Calu3 (cell line): ENCODE measurements at regions of chr20 and their contacts with region 1.

Region 1: GRCh38 chr20:62386383-62387218 is at the start of gene RPS21:
- DNase-seq: peak; percentile 98
- H3K4me3 Mint-ChIP-seq: peak within 1 kb of the TSS; percentile 96
- H3K27ac Mint-ChIP-seq: peak within 1 kb of the TSS; percentile 92
- H3K4me1 Mint-ChIP-seq: peaks cover 63% of the 10 kb centered on the region
- H3K27me3 Mint-ChIP-seq: no peaks in the 10 kb centered on the region
- CTCF ChIP-seq: no peak
- total RNA-seq, gene RPS21: 1,920 and 1,936 TPM in 2 replicates

Region 2: GRCh38 chr20:62025832-62026563 is 360.6 kb before region 1 on chr20:
- CTCF ChIA-PET with region 1: no interaction called
- intact Hi-C with region 1: no loop called
- DNase-seq: no peak
- H3K4me3 Mint-ChIP-seq: no peak overlapping the region
- H3K27ac Mint-ChIP-seq: no peak overlapping the region
- H3K4me1 Mint-ChIP-seq: peaks cover 59% of the 10 kb centered on the region
- H3K27me3 Mint-ChIP-seq: no peaks in the 10 kb centered on the region
- CTCF ChIP-seq: no peak

Region 3: GRCh38 chr20:62121776-62122631 is 264.6 kb before region 1 on chr20 and contains the start of gene LSM14B:
- CTCF ChIA-PET with region 1: no interaction called
- intact Hi-C with region 1: no loop called
- DNase-seq: peak; percentile 100
- H3K4me3 Mint-ChIP-seq: peak within 1 kb of the TSS; percentile 81
- H3K27ac Mint-ChIP-seq: peak within 1 kb of the TSS; percentile 82
- H3K4me1 Mint-ChIP-seq: peaks cover 16% of the 10 kb centered on the region
- H3K27me3 Mint-ChIP-seq: peaks cover 38% of the 10 kb centered on the region
- CTCF ChIP-seq: no peak
- total RNA-seq, gene LSM14B: 76.9 and 78.0 TPM in 2 replicates

Region 4: DNA sequence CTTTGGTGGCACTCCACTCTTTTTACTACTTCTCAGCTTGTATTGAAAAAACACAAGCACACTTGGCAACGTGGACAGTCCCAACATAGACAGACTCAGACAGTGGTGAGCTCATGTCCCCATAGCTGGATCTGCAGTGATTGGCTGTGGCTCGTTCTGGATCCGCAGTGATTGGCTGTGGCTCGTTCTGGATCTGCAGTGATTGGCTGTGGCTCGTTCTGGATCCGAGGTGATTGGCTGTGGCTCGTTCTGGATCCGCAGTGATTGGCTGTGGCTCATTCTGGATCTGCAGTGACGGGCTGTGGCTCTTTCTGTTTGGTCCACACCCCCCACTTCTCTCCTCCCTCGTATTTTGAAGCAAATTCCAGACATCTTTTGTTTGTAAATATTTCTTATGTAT is 120.3 kb before region 1 on chr20:
- CTCF ChIA-PET with region 1: no interaction called
- intact Hi-C with region 1: no loop called
- DNase-seq: no peak
- H3K4me3 Mint-ChIP-seq: no peak overlapping the region
- H3K27ac Mint-ChIP-seq: no peak overlapping the region
- H3K4me1 Mint-ChIP-seq: no peaks in the 10 kb centered on the region
- H3K27me3 Mint-ChIP-seq: no peaks in the 10 kb centered on the region
- CTCF ChIP-seq: no peak

Region 5: DNA sequence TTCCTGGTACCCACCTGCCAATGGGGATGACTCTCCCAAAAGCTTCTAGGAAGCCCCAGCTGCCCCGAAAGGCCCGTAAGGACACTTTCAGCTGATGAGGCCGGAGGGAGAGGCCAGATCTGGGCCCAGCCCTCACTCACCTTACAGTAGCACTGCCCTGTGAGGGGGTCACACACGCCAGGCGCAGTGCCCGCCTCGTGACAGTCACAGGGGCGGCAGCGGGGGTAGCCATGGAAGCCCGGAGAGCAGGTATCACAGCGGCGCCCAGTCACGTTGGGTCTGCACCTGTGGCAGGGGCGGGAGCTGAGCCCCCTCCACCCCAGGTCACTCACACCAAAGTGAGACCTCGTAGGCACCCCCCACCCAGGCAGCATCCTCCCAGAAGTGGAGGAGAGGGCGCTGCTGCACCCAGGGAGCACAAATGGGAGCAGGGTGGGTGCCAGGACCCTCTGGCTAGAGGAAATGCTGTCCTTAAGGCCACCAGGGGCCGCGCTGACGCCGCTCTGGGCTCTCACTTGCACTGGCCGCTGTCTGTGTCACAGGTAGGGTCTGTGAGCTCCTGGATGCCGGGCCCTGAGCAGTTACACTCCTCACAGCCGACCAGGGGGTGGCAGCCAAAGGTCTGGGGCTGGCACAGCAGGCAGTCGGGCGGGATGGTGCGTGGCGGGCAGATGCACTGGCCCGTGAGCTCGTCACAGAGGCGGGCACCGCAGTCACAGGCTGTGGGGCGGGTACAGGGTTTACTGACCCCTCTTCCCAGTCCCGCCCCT is 58.7 kb before region 1 on chr20:
- CTCF ChIA-PET with region 1: interaction called, 14 read pairs
- intact Hi-C with region 1: no loop called
- DNase-seq: no peak
- H3K4me3 Mint-ChIP-seq: no peak overlapping the region
- H3K27ac Mint-ChIP-seq: peak overlapping the region; percentile 30
- H3K4me1 Mint-ChIP-seq: no peaks in the 10 kb centered on the region
- H3K27me3 Mint-ChIP-seq: no peaks in the 10 kb centered on the region
- CTCF ChIP-seq: no peak

Region 6: GRCh38 chr20:62368976-62369814 is 17.4 kb before region 1 on chr20:
- CTCF ChIA-PET with region 1: interaction called, 22 read pairs
- intact Hi-C with region 1: no loop called
- DNase-seq: peak; percentile 62
- H3K4me3 Mint-ChIP-seq: peak overlapping the region; percentile 79
- H3K27ac Mint-ChIP-seq: no peak overlapping the region
- H3K4me1 Mint-ChIP-seq: peaks cover 37% of the 10 kb centered on the region
- H3K27me3 Mint-ChIP-seq: no peaks in the 10 kb centered on the region
- CTCF ChIP-seq: peak; percentile 81

Region 7: DNA sequence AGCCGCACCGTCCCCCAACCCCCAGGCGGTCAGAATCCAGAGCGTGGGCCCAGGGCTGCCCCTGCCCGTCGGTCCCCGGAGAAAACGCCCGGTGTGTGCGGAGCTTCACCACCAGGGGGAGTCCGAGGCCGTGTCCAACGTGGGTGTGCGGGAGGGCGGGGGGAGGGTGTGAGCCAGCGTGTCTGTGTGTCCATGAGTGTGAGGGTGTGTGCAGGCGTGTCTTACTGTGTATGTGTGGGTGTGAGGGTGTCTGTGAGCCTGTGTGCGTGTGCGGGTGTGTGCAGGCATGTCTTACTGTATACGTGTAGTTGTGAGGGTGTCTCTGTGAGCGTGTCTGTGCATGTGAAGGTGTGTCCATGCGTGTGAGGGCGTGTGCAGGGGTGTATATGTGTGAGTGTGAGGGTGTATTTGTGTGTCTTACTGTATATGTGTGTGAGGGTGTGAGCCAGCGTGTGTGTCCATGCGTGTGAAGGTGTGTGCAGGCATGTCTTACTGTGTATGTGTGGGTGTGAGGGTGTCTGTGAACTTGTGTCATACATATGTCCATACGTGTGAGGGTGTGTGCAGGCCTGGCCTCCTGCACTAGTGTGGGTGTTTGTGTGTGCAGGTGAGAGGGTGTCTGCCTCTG is 113.8 kb after region 1 on chr20:
- CTCF ChIA-PET with region 1: interaction called, 11 read pairs
- intact Hi-C with region 1: no loop called
- DNase-seq: peak; percentile 90
- H3K4me3 Mint-ChIP-seq: no peak overlapping the region
- H3K27ac Mint-ChIP-seq: peak overlapping the region; percentile 1
- H3K4me1 Mint-ChIP-seq: peaks cover 20% of the 10 kb centered on the region
- H3K27me3 Mint-ChIP-seq: peaks cover 23% of the 10 kb centered on the region
- CTCF ChIP-seq: peak; percentile 93